ENCODE measurements at regions of chr5 and their contacts with region 1.

Region 1: DNA sequence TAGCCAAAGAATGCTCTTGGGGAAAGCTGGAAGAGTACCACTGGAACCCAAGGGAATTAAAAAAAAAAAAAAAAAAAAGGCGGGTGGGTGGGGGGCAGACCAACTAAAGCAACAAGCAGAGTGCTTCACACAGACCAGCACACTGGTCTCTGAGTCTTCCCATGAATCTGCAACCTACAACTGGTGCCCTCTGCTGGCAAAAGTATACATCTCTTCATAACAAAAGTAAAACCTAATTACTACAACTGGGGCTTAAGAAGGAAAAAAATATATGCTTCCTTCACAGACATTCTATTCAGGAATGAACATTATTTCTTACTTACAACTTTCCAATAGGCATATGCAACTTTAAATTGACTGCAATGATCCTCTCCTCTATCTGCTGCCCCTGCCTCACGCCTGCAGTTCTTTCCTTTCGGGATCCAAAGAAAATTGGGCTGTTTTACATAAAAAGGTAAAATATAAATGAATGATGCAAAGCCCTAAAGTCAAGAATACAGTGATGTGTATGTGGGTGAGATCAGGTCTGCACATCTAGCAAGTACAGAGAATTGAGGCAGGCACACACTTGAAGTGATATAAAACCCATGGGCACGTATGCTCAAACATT is 7.2 kb upstream of the KLHL3 start:
- DNase-seq: peak; percentile 77
- H3K4me3 Mint-ChIP-seq: no peak overlapping the region
- H3K27ac Mint-ChIP-seq: no peak overlapping the region
- H3K4me1 Mint-ChIP-seq: peaks cover 23% of the 10 kb centered on the region
- H3K27me3 Mint-ChIP-seq: no peaks in the 10 kb centered on the region

Region 2: DNA sequence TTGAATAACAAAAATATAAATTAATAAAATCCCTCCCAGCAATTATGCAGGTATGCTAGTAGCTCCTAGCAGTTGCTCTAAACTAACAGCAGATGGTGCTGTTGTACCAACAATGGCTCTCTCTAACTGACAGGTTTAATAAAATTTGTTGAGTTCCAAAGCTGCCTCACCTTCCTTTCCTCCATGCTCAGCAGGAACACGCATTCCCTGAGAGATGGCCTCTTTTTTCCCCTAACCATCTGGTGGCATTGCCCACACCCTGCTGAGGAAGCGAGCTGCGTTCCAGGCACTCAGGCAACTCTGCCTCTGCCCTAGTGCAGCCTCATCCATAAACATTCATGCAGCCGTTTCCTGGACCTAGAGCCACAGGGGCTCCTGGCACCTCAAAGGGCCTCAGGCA is 113.5 kb before region 1 on chr5:
- CTCF ChIA-PET with region 1: interaction called, 90 read pairs
- DNase-seq: peak; percentile 29
- H3K4me3 Mint-ChIP-seq: no peak overlapping the region
- H3K27ac Mint-ChIP-seq: no peak overlapping the region
- H3K4me1 Mint-ChIP-seq: no peaks in the 10 kb centered on the region
- H3K27me3 Mint-ChIP-seq: no peaks in the 10 kb centered on the region

Region 3: GRCh38 chr5:137660349-137660817 is 82.8 kb before region 1 on chr5:
- CTCF ChIA-PET with region 1: interaction called, 551 read pairs
- DNase-seq: peak; percentile 85
- H3K4me3 Mint-ChIP-seq: no peak overlapping the region
- H3K27ac Mint-ChIP-seq: no peak overlapping the region
- H3K4me1 Mint-ChIP-seq: peaks cover 22% of the 10 kb centered on the region
- H3K27me3 Mint-ChIP-seq: no peaks in the 10 kb centered on the region

Region 4: DNA sequence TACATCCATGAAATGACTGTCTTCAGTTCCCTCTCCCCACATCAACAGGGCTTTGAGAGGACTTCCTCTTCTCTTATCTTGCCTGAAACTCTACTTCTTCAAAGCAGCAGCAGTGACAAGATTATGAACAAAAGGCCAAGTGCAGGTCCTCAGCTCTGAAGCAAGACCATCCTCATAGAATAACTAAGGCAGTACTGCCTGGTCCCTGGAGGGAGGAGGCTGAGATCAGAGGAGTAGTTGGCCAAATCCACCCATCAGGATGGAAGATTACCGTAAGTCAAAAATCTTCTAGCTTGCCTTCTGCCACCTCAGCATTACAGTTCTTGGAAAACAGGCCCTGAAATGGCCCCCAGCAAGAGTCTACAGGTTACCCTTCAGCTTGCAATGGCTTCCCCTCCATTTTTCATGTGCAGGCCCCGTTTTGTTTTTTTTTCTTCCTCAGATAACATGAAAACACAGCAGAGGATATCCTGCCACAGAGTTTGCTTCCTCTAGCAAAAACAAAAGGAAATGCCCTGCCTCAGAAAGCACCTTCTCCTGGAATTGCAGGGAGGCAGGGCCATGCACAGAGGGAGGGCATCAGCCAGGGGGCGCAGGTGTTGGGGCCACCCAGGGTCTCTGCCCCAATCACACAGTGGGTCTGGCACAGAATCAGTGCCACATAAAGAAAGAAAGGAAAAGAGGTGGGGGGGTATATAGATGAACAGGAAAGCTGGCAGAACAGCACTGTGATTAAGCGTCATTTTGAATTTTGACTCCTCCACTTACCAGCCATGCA is 47.3 kb before region 1 on chr5:
- CTCF ChIA-PET with region 1: interaction called, 39 read pairs
- DNase-seq: peak; percentile 62
- H3K4me3 Mint-ChIP-seq: peak overlapping the region; percentile 16
- H3K27ac Mint-ChIP-seq: peak overlapping the region; percentile 94
- H3K4me1 Mint-ChIP-seq: peaks cover 57% of the 10 kb centered on the region
- H3K27me3 Mint-ChIP-seq: no peaks in the 10 kb centered on the region

Region 5: DNA sequence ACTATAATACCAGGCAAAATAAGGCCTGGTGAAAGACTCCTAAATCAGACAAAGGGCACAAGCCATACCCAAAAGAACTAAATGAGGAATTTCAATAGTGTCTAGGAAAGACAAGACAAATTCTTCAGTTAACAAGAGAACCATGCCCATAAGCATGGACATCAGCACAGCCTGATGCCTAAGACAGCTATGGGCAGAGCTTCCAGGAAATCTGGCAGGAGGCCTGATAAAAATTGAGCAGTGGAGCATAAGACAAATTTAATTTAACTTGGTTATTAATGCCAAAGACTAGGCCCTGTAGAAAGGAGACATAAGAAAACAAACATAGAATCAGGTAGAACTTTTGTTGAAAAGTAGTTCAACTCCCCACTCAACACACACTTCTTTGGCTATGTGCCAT is 24.5 kb before region 1 on chr5:
- CTCF ChIA-PET with region 1: interaction called, 18 read pairs
- DNase-seq: no peak
- H3K4me3 Mint-ChIP-seq: no peak overlapping the region
- H3K27ac Mint-ChIP-seq: no peak overlapping the region
- H3K4me1 Mint-ChIP-seq: peaks cover 6% of the 10 kb centered on the region
- H3K27me3 Mint-ChIP-seq: no peaks in the 10 kb centered on the region

Region 6: GRCh38 chr5:137730336-137730735 is 12.8 kb before region 1 on chr5:
- CTCF ChIA-PET with region 1: interaction called, 16 read pairs
- DNase-seq: no peak
- H3K4me3 Mint-ChIP-seq: no peak overlapping the region
- H3K27ac Mint-ChIP-seq: no peak overlapping the region
- H3K4me1 Mint-ChIP-seq: peaks cover 44% of the 10 kb centered on the region
- H3K27me3 Mint-ChIP-seq: peaks cover 3% of the 10 kb centered on the region

Region 7: GRCh38 chr5:137754126-137754960 is 11.2 kb after region 1 on chr5 and contains the start of gene HNRNPA0:
- CTCF ChIA-PET with region 1: interaction called, 18 read pairs
- DNase-seq: peak; percentile 97
- H3K4me3 Mint-ChIP-seq: peak within 1 kb of the TSS; percentile 96
- H3K27ac Mint-ChIP-seq: peak within 1 kb of the TSS; percentile 100
- H3K4me1 Mint-ChIP-seq: peaks cover 31% of the 10 kb centered on the region
- H3K27me3 Mint-ChIP-seq: peaks cover 14% of the 10 kb centered on the region

Region 8: DNA sequence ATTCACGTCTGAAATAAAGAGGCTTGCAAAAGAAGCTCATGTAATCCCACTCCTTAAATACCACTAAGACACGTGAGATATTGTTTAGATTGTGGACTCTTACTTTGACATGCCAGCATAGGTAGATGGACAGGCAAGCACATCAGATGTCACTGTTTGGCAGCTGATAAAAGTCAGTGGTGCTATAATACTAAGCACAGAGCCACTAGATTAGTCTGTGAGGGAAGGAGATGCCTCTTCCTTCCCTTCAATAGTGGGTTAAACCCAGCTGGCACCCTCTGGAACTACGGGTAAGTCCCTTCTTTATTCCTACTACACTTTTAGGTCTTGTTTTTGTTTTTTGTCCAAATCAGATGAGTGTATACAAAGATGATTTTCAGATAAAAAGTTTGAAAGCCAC is 124.5 kb after region 1 on chr5 and contains the start of gene MYOT:
- CTCF ChIA-PET with region 1: no interaction called
- DNase-seq: no peak
- H3K4me3 Mint-ChIP-seq: no peak within 1 kb of the TSS
- H3K27ac Mint-ChIP-seq: no peak within 1 kb of the TSS
- H3K4me1 Mint-ChIP-seq: peaks cover 3% of the 10 kb centered on the region
- H3K27me3 Mint-ChIP-seq: peaks cover 5% of the 10 kb centered on the region